ENCODE measurements at regions of chr4 and their contacts with region 1.

Region 1: GRCh38 chr4:165864271-165864670 is 8.8 kb upstream of the TLL1 start:
- DNase-seq: peak; percentile 13
- H3K27ac ChIP-seq: no peak overlapping the region
- CTCF ChIP-seq: peak; percentile 49

Region 2: DNA sequence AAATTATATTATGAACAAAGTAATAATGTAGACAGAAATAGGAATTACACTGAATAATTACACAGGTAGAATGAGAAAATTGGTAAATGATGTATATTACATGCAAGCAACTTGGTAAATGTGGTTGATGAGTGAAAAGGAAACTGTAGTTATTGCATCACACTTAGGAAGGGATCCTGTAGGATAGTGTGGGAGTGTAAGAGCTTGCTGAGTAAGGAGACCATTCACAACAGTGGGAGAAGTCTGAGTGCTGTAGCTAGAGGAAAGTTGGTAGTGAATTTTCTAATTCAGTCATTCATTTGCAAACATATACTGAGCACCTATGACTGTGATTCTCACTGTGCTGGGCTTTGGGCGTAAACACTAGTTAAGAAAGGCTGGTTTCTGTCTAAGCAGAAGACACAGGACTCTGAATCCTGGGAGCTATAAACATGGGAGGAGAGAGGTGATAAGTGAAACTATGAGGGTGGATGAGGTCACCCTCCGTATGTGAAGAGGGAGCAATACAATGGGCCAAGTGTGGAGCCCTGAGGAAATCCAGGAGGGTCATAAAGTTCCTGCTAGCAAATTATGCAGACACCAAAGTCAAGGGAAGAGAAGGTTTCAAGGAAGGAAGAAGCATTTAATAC is 499.7 kb before region 1 on chr4:
- CTCF ChIA-PET with region 1: no interaction called
- POLR2A ChIA-PET with region 1: no interaction called
- DNase-seq: no peak
- H3K27ac ChIP-seq: no peak overlapping the region
- CTCF ChIP-seq: no peak

Region 3: DNA sequence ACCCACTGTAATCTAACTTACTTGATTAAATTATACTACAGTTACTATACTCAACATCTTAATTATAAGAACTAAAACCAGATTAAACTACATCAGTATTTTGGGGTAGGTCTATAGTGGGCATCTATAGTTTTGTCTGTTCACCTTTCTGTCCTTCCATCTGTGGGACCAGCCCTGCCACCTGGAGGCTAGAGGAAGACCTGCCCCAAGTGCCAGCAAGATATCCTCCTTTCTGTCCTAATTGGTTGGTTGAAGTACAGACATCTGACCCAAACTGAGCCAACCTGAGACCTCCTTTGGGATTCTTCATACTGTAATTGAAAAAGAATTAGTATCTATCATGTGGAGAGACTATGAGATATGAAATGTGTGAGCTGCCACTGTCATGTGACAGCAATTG is 163.4 kb before region 1 on chr4:
- CTCF ChIA-PET with region 1: no interaction called
- POLR2A ChIA-PET with region 1: no interaction called
- DNase-seq: peak; percentile 16
- H3K27ac ChIP-seq: no peak overlapping the region
- CTCF ChIP-seq: no peak

Region 4: DNA sequence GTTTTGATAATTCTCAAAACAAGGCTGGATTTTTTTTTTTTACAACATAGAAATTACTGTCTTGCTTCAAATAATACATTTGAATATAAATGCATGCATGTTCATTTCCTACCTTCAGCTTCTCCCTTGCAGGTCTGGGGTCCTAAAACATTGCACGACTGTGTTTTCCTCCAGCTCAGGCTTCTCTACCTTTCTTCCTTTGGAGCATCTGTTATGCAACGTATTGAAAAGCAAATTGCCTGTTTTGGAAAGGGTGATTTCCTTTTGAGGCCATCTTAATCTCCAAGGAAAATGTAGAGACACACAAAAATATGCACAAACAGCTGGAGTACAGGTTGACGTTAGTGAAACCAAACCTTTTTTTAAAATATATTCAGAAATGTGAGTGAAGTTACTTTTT is 106.8 kb before region 1 on chr4:
- CTCF ChIA-PET with region 1: interaction called, 10 read pairs
- POLR2A ChIA-PET with region 1: no interaction called
- DNase-seq: no peak
- H3K27ac ChIP-seq: no peak overlapping the region
- CTCF ChIP-seq: no peak

Measured in RWPE1 (cell line).